ENCODE measurements at regions of chr15 and their contacts with region 1.

Region 1: DNA sequence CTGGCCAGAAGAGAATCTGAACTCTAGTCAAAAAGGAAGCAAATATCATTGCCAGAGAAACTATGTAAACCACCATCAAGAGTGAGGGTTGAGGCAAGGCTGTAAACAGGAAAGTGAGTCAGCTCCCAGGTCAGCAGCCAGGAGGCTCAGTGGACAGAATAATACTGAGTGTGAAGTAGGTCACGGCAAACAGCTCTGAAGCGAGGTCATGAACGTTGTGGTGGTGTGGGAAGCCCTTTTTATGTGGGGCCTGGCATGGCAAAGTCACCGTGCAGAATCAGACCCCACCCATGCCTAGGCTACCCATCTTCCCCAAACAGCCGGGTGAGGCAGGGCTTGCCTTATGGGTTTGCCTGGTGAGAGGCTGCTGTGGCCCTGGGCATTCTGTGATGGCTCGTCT is 43.9 kb downstream of the THBS1 start:
- DNase-seq: peak; percentile 46 to 92 (median 76)
- ATAC-seq: peak; percentile 55
- H3K4me3 ChIP-seq: no peak overlapping the region
- H3K4me3 Mint-ChIP-seq: peak overlapping the region; percentile 70
- H3K27ac ChIP-seq: peak overlapping the region; percentile 54 to 88
- H3K27ac Mint-ChIP-seq: peak overlapping the region; percentile 99
- H3K4me1 ChIP-seq: peaks cover 71% of the 10 kb centered on the region
- H3K4me1 Mint-ChIP-seq: peaks cover 77% of the 10 kb centered on the region
- H3K27me3 ChIP-seq: no peaks in the 10 kb centered on the region
- H3K27me3 Mint-ChIP-seq: no peaks in the 10 kb centered on the region
- CTCF ChIP-seq: no peak

Region 2: DNA sequence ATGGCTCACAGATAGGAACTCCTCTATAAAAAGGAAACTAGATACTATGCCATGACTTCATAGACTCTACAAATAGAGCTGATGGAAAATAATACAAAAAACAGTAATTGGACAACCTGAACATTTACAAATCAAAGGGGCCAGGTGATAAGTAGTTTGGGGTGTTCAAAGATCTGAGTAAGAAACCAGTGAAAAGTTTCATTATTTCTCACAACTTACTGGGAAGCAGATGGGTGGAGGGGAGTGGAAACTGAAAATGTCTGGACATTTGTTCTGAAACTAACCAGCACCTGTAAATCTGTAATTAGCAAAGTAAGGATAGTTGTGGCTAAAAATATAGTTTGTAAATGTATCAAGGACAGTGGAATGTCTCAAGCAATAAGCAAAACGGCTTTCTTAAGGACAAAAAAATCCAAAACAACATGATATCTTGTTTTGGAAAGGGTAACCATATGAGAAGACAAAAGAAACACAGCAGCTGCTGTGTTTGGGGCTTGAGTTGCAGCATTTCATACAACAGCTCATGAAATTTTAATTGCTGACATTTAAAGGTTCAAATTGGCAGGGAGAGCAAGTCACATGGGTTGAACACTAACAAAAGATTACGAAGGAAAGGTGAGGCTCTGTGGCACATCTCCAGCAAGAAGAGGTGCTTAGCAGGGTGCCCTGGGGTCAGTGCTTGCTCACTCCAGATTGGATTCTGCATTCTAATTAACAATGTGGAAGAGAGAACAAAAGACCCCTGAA is 70.7 kb before region 1 on chr15:
- CTCF ChIA-PET with region 1: no interaction called
- POLR2A ChIA-PET with region 1: no interaction called
- intact Hi-C with region 1: no loop called
- DNase-seq: no peak
- ATAC-seq: no peak
- H3K4me3 ChIP-seq: no peak overlapping the region
- H3K4me3 Mint-ChIP-seq: no peak overlapping the region
- H3K27ac ChIP-seq: no peak overlapping the region
- H3K27ac Mint-ChIP-seq: no peak overlapping the region
- H3K4me1 ChIP-seq: no peaks in the 10 kb centered on the region
- H3K4me1 Mint-ChIP-seq: no peaks in the 10 kb centered on the region
- H3K27me3 ChIP-seq: no peaks in the 10 kb centered on the region
- H3K27me3 Mint-ChIP-seq: no peaks in the 10 kb centered on the region
- CTCF ChIP-seq: no peak

Region 3: DNA sequence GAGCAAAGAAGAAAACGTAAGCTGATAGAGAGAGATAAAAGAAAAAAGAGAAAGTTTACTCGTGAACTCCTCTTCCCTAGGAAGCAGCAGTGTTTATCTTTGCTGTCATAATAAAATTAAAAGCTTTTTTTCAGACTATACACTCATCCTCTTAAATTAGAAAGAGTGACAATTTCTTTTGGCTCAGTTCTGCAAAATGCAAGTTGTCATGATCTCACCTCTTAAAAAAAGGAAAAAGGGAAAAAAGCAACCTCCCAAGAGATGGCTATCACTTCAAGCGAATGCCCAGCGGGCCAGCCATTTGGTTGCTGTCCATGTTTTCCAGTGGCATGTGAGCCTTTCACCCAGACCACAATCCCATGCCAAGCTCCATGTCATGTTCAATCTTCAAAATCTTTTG is 51.0 kb before region 1 on chr15:
- CTCF ChIA-PET with region 1: no interaction called
- POLR2A ChIA-PET with region 1: no interaction called
- intact Hi-C with region 1: no loop called
- DNase-seq: no peak
- ATAC-seq: no peak
- H3K4me3 ChIP-seq: no peak overlapping the region
- H3K4me3 Mint-ChIP-seq: no peak overlapping the region
- H3K27ac ChIP-seq: no peak overlapping the region
- H3K27ac Mint-ChIP-seq: no peak overlapping the region
- H3K4me1 ChIP-seq: no peaks in the 10 kb centered on the region
- H3K4me1 Mint-ChIP-seq: no peaks in the 10 kb centered on the region
- H3K27me3 ChIP-seq: peaks cover 0 to under 1% of the 10 kb centered on the region in 2 experiments
- H3K27me3 Mint-ChIP-seq: peaks cover 29% of the 10 kb centered on the region
- CTCF ChIP-seq: peak; percentile 5

Region 4: DNA sequence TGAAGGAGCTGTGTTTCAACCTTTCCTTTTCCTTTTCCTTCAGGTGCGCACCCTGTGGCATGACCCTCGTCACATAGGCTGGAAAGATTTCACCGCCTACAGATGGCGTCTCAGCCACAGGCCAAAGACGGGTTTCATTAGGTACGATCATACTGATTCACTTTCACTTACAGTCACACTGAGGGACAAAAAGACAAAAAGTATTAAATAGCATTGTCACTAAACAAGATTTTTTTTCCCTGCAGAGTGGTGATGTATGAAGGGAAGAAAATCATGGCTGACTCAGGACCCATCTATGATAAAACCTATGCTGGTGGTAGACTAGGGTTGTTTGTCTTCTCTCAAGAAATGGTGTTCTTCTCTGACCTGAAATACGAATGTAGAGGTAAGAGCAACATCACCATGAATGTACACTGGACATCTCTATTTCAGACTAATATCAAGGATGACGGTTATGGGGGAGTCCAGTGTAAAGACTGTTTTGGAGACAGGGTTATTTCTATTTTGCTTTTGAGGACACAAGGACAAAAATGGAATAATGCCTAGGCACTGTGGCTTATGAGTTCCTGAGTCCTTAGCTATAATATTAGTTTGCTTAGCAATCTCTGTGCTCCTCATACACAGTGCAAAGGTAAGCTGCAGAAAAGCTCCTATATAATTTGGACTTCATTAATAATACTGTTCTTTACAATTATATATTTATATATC is 30.6 kb before region 1 on chr15:
- CTCF ChIA-PET with region 1: interaction called, 4 read pairs
- POLR2A ChIA-PET with region 1: no interaction called
- intact Hi-C with region 1: loop called (anchors 2 to 5 kb)
- DNase-seq: peak in 4 of 9 experiments; percentile 19 to 72 (median 52)
- ATAC-seq: peak; percentile 58
- H3K4me3 ChIP-seq: no peak overlapping the region
- H3K4me3 Mint-ChIP-seq: peak overlapping the region; percentile 20
- H3K27ac ChIP-seq: no peak overlapping the region
- H3K27ac Mint-ChIP-seq: peak overlapping the region; percentile 74
- H3K4me1 ChIP-seq: no peaks in the 10 kb centered on the region
- H3K4me1 Mint-ChIP-seq: peaks cover 4% of the 10 kb centered on the region
- H3K27me3 ChIP-seq: no peaks in the 10 kb centered on the region
- H3K27me3 Mint-ChIP-seq: no peaks in the 10 kb centered on the region
- CTCF ChIP-seq: no peak

Region 5: GRCh38 chr15:39642011-39642640 is 17.3 kb after region 1 on chr15:
- CTCF ChIA-PET with region 1: interaction called, 5 read pairs
- POLR2A ChIA-PET with region 1: interaction called, 10 read pairs
- intact Hi-C with region 1: loop called in 1 of 2 experiments (anchors 1 kb)
- DNase-seq: no peak
- ATAC-seq: peak; percentile 25
- H3K4me3 ChIP-seq: no peak overlapping the region
- H3K4me3 Mint-ChIP-seq: no peak overlapping the region
- H3K27ac ChIP-seq: no peak overlapping the region
- H3K27ac Mint-ChIP-seq: no peak overlapping the region
- H3K4me1 ChIP-seq: no peaks in the 10 kb centered on the region
- H3K4me1 Mint-ChIP-seq: peaks cover 19% of the 10 kb centered on the region
- H3K27me3 ChIP-seq: no peaks in the 10 kb centered on the region
- H3K27me3 Mint-ChIP-seq: no peaks in the 10 kb centered on the region
- CTCF ChIP-seq: no peak

Measured in CD8-positive, alpha-beta T cell (primary cell).